SK-N-SH (cell line): ENCODE measurements at regions of chr4 and their contacts with region 1.

Region 1: GRCh38 chr4:185597532-185598188 is 62.4 kb upstream of the PDLIM3 start:
- DNase-seq: peak; percentile 73
- H3K4me3 ChIP-seq: peak overlapping the region in 1 of 2 experiments; percentile 43; a peak in 1 of 4 replicates
- H3K27ac ChIP-seq: no peak overlapping the region
- H3K4me1 ChIP-seq: no peaks in the 10 kb centered on the region
- H3K27me3 ChIP-seq: no peaks in the 10 kb centered on the region
- CTCF ChIP-seq: peak; percentile 99
- EP300 ChIP-seq: no peak
- RAD21 ChIP-seq: peak; percentile 97

Region 2: DNA sequence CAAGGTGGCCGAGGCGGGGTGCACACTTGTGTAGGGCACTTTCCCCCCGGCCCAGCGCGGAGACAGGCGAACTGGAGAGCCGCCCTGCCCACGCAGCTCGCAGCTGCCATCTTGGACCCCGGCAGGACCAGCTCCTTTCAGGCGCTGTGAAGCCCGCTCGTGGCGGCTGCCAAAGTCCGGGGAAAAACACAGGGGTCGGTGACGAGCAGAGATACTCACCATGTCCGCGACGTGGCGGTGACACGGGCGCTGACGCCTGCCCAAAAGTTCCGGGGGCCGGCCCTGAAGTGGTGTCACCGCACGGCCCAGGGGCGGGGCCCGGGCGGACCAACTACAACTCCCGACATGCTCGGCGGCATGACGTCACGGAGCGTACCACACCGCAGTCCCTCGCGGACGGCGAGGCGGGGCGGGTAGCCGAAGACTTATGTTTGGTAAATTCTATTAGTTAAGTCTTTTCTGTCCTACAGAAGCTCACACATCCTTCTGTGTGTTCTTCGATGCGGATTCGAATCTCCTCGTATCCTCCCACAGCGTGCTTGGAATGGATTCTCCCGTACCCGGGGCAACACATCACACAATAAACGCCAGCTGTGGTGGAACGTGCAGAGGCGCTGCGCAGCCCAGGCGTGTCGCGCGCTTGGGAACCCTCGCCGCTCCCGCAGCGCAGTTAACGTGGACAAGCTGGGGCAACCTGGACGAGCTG is 171.9 kb before region 1 on chr4 and contains the start of gene UFSP2:
- CTCF ChIA-PET with region 1: interaction called, 15 read pairs
- POLR2A ChIA-PET with region 1: no interaction called
- DNase-seq: peak; percentile 94
- H3K4me3 ChIP-seq: peak within 1 kb of the TSS; percentile 71 to 82
- H3K27ac ChIP-seq: peak within 1 kb of the TSS; percentile 88 to 95
- H3K4me1 ChIP-seq: peaks cover 0 to 8% of the 10 kb centered on the region in 2 experiments; a peak in 2 of 4 replicates
- H3K27me3 ChIP-seq: no peaks in the 10 kb centered on the region
- CTCF ChIP-seq: no peak
- EP300 ChIP-seq: peak in 1 of 2 experiments; percentile 45; a peak in 1 of 4 replicates
- RAD21 ChIP-seq: no peak
- polyA plus RNA-seq, gene UFSP2: 15.5 and 17.6 TPM in 2 replicates

Region 3: GRCh38 chr4:185479507-185479971 is 118.1 kb before region 1 on chr4:
- CTCF ChIA-PET with region 1: interaction called, 30 read pairs
- POLR2A ChIA-PET with region 1: no interaction called
- DNase-seq: no peak
- H3K4me3 ChIP-seq: no peak overlapping the region
- H3K27ac ChIP-seq: no peak overlapping the region
- H3K4me1 ChIP-seq: no peaks in the 10 kb centered on the region
- H3K27me3 ChIP-seq: no peaks in the 10 kb centered on the region
- CTCF ChIP-seq: no peak
- EP300 ChIP-seq: no peak
- RAD21 ChIP-seq: no peak

Region 4: GRCh38 chr4:185576962-185577950 is 20.4 kb before region 1 on chr4:
- CTCF ChIA-PET with region 1: interaction called, 17 read pairs
- POLR2A ChIA-PET with region 1: no interaction called
- DNase-seq: peak; percentile 52
- H3K4me3 ChIP-seq: no peak overlapping the region
- H3K27ac ChIP-seq: peak overlapping the region in 1 of 2 experiments; percentile 71; a peak in 2 of 4 replicates
- H3K4me1 ChIP-seq: peaks cover 5 to 15% of the 10 kb centered on the region in 2 experiments; a peak in 3 of 4 replicates
- H3K27me3 ChIP-seq: no peaks in the 10 kb centered on the region
- CTCF ChIP-seq: no peak
- EP300 ChIP-seq: peak in 1 of 2 experiments; percentile 43; a peak in 1 of 4 replicates
- RAD21 ChIP-seq: no peak

Region 5: GRCh38 chr4:185608185-185608584 is 10.5 kb after region 1 on chr4:
- CTCF ChIA-PET with region 1: interaction called, 30 read pairs
- POLR2A ChIA-PET with region 1: no interaction called
- DNase-seq: no peak
- H3K4me3 ChIP-seq: no peak overlapping the region
- H3K27ac ChIP-seq: no peak overlapping the region
- H3K4me1 ChIP-seq: no peaks in the 10 kb centered on the region
- H3K27me3 ChIP-seq: no peaks in the 10 kb centered on the region
- CTCF ChIP-seq: no peak
- EP300 ChIP-seq: no peak
- RAD21 ChIP-seq: no peak